ENCODE measurements at regions of chr10 and their contacts with region 1.

Region 1: DNA sequence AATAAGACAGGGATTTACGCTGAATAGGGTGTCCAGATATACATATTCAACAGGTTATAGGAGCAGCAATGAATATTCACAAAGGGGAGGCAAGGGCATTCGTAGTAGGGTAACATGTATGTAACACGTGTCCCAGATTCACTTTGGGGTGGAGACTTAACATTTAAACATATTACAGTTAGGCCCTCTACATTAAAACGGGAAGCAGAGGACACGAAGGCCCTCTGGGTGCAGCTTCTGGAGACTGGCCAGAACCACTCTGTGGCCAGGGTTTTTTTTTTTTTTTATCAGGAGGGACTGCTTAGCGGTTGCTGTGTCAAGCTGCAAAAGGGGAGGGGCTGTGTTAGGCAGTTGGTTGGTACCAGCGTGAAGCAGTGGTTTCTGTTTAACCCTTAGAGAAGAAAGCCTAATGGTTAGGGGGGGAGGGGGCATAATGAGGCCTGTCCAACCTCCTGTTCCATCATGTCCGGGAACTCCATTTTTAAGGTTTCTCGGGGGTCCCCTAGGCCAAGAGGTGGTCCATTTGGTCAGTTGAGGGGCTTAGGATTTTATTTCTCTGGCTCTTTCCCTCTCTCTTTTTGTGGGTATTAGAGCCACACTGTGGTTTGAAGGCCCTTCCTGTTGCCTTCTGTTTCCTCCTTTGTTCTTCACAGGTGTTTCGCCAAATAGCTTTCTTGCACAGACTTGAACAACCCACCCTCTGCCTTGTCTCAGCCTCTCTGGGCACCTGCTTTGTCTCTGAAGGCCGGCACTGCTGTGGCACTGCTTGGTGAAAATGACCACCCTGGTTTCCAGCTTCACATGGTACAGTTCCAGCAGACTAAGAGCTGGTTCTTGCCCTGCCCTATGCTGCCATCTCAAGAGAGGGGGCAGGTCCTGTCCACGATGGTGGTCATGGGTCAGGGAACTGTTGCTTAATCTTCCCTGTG is 26.4 kb downstream of the PRF1 start:
- DNase-seq: peak; percentile 68
- H3K4me3 Mint-ChIP-seq: peak overlapping the region; percentile 33
- H3K27ac Mint-ChIP-seq: peak overlapping the region; percentile 94
- H3K4me1 Mint-ChIP-seq: peaks cover 50% of the 10 kb centered on the region
- H3K27me3 Mint-ChIP-seq: no peaks in the 10 kb centered on the region

Region 2: GRCh38 chr10:69968830-69969229 is 607.3 kb before region 1 on chr10:
- intact Hi-C with region 1: no loop called
- DNase-seq: peak; percentile 49
- H3K4me3 Mint-ChIP-seq: no peak overlapping the region
- H3K27ac Mint-ChIP-seq: no peak overlapping the region
- H3K4me1 Mint-ChIP-seq: no peaks in the 10 kb centered on the region
- H3K27me3 Mint-ChIP-seq: peaks cover 24% of the 10 kb centered on the region

Region 3: DNA sequence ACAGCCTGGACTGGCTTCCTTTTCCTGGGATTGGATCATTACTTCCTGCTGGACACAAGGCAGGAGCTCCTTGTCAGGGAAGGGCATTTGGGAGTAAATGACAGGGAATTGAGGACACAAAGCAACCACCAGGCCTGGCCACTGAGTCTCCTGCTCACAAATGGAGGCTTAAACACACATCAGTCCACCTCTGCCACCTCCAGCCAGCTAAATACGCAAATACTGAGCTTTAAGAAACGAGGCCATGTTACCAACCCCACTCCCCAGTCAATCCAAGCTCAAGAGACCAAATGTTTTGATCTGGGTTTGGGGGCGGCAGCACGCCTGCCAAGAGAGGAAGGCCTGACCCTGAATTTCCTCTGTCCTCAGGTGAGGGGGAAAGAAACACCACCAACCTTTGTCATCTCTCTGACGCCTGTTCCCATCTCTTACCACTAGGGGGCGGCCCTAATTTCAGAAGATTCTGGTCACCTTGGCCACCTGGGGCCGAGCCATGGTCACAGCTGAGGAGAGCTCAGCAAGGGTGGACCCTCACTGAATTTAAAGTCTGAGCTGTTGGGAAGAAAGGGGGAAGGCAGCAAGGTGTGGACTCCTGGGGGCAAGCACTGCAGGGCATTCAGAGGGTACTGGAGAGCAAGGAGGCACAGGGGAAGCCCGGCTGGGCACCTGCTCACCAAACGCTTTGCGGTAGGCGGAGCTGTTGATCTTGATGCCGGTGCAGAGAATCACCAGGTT is 460.0 kb before region 1 on chr10:
- intact Hi-C with region 1: no loop called
- DNase-seq: peak; percentile 88
- H3K4me3 Mint-ChIP-seq: no peak overlapping the region
- H3K27ac Mint-ChIP-seq: no peak overlapping the region
- H3K4me1 Mint-ChIP-seq: peaks cover 6% of the 10 kb centered on the region
- H3K27me3 Mint-ChIP-seq: no peaks in the 10 kb centered on the region

Region 4: DNA sequence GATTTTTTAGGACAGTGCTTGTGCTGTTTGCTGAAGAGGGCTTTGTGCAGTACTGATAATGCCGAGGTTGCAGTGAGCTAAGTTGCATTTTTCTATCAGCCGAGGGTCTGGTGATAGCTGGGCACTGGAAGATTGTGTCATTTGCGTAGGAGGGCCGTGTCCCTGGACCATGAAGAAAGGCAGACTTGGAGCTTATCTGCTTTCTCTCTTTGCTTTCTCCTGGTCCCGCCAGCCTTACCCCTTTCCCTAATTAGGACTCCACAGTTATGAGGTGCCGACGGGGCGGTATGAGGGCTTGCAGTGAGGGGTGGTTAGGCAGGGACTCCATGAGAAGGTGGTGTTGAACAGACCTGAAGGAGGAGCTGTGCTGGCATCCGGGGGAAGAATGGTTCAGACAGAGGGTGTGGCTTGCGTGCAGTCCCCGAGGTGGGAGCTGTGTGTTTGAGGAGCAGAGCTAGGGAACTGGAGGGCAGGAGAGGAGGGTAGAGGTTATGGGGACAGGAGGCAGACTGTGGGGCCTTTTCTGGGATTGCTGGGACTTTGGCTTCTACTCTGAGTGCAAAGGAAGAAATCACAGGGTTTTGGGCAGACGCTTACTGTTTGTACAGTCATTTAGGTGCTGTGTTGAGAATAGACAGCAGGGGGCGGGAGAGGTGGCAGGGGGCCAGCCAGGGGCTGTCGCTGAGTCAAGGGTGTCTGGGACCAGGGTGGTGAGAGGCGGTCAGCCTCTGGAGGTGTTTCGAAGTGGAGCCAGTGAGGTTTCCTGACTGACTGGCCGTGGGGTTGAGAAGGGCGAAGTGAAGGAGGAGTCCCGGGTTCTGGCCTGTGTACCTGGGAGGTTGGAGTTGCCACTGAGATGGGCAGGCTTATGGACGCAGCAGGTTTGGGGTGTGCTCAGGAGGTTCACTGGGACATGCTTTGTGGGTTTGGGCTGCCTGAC is 17.0 kb before region 1 on chr10:
- intact Hi-C with region 1: loop called (anchors 1 kb)
- DNase-seq: peak; percentile 90
- H3K4me3 Mint-ChIP-seq: peak overlapping the region; percentile 76
- H3K27ac Mint-ChIP-seq: peak overlapping the region; percentile 70
- H3K4me1 Mint-ChIP-seq: peaks cover 24% of the 10 kb centered on the region
- H3K27me3 Mint-ChIP-seq: no peaks in the 10 kb centered on the region

Region 5: DNA sequence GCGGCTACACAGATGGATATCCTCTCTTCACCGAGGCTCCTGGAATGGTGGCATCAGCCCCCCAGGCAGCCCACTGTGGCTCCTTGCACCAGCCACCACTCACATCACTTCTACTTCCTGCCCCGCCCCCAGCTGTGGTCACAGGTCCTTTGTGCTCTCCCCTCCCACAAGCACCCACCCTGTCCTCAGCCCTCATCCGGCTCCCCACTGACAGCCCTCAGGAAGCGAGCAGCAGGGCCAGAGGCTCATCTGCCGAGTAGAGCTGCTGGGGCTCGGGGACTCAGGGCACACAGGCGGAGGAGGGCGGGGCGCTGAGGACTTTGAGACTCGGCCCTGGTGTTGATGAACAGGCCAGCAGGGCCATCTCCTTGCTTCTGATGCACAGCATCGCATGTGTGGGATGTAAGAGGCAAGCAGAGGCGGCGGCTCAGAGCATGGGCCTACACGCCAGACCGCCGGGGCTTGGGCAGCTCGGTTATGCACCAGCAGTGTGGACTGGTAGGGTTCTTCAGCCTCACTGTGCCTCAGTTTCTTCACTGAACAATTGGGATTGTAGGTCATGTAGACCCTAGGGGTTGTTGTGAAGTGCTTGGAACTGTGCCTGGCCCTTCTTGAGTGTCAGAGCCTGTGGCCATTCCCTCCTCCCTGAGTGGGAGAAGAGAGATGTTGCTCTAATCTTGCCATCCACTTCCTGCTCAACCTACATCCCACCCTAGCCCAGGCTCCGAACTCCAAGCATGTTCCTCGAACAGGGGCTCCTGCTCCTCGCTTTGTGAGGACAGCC is 26.7 kb after region 1 on chr10 and contains the start of gene PRF1:
- intact Hi-C with region 1: loop called (anchors 1 kb)
- DNase-seq: peak; percentile 94
- H3K4me3 Mint-ChIP-seq: peak within 1 kb of the TSS; percentile 85
- H3K27ac Mint-ChIP-seq: peak within 1 kb of the TSS; percentile 88
- H3K4me1 Mint-ChIP-seq: peaks cover 34% of the 10 kb centered on the region
- H3K27me3 Mint-ChIP-seq: peaks cover 2% of the 10 kb centered on the region
- total RNA-seq, gene PRF1: 76.5 and 79.9 TPM in 2 replicates

Region 6: DNA sequence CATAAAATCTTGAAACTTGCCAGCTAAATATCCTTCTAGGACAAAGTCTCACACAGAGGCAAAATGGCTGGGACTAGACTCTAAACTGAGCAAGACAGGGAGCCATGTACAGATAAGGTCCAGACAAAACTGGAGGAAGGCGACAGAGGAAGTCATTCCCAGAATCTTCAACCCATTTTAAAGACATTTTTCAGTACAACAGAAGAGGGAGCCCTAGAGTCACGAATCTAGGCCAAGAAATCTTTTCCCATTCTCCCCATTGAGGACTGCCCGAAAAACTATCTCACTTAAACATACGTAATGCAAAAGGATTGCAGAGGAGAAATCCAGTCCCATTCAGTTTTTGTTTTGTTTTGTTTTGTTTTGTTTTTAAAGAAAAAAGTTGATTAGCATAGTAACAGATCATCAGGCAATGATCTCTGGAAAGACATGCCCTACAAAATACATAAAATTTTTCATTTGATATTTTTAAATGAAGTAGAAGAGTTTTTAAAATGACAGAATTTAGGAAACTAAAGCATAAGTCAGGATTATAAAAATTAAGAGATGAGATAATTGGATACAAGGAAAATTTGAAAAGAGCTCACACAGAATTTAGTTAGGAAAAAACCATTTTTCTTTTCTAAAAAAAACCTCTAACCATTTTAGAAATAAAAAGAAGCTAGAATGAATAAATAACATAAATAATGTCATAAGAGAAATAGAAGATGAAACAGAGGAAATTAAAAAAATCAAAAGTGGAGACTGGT is 43.3 kb after region 1 on chr10:
- intact Hi-C with region 1: loop called (anchors 1 kb)
- DNase-seq: no peak
- H3K4me3 Mint-ChIP-seq: no peak overlapping the region
- H3K27ac Mint-ChIP-seq: peak overlapping the region; percentile 84
- H3K4me1 Mint-ChIP-seq: peaks cover 39% of the 10 kb centered on the region
- H3K27me3 Mint-ChIP-seq: no peaks in the 10 kb centered on the region

Region 7: GRCh38 chr10:70832852-70833528 is 256.9 kb after region 1 on chr10:
- intact Hi-C with region 1: loop called (anchors 5 kb)
- DNase-seq: no peak
- H3K4me3 Mint-ChIP-seq: peak overlapping the region; percentile 68
- H3K27ac Mint-ChIP-seq: peak overlapping the region; percentile 86
- H3K4me1 Mint-ChIP-seq: peaks cover 42% of the 10 kb centered on the region
- H3K27me3 Mint-ChIP-seq: no peaks in the 10 kb centered on the region